ENCODE measurements at regions of chr20 and their contacts with region 1.

Region 1: DNA sequence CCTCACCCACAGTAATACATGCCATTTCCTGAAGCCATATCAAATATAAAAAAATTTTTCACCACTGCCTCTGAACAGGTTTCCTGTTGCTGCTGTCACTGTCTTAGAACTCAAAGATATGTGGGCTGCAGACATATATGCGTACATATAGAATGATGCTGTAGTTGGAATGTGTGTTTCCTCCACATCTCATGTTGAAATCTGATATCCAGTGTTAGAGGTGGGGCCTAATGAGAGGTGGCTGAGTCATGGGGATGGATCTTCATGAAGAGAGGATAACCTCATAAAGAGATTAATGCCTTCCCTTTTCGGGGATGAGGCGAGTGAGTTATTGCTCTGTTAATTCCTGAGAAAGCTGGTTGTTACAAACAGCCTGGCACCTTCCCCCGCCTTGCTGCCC is 7.7 kb upstream of the SCP2D1 start:
- DNase-seq: no peak
- H3K4me3 ChIP-seq: no peak overlapping the region
- H3K4me1 ChIP-seq: no peaks in the 10 kb centered on the region
- H3K27me3 ChIP-seq: 0 out of 2 replicates have a peak, but pooled peaks cover 2% of the 10 kb centered on the region

Region 2: GRCh38 chr20:18904624-18905023 is 98.7 kb after region 1 on chr20:
- in situ Hi-C with region 1: loop called (anchors 25 kb)
- DNase-seq: no peak
- H3K4me3 ChIP-seq: no peak overlapping the region
- H3K4me1 ChIP-seq: no peaks in the 10 kb centered on the region
- H3K27me3 ChIP-seq: no peaks in the 10 kb centered on the region

Region 3: GRCh38 chr20:19090332-19090731 is 284.5 kb after region 1 on chr20:
- in situ Hi-C with region 1: no loop called
- DNase-seq: no peak
- H3K4me3 ChIP-seq: no peak overlapping the region
- H3K4me1 ChIP-seq: no peaks in the 10 kb centered on the region
- H3K27me3 ChIP-seq: no peaks in the 10 kb centered on the region

Region 4: DNA sequence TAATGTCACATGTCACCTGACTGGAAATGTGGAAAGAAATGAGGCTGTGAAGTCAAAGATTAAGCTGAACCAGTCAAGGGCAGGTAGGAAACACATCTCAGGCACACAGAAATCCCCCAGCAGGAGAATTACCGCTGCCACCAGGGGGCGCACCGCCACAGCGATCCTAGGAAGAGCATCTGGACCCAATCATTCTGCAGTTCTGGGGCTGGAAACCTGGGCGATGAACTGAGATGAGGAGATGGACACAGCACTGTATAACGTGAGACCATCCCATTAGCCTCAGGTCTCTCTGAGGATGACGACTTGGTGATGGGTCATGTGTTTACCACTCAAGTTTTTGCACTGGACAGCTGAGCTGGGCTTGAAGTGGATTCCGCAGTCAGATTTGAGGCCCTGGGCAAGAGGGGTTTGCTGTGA is 400.1 kb after region 1 on chr20:
- in situ Hi-C with region 1: loop called (anchors 25 kb)
- DNase-seq: peak; percentile 20 to 81
- H3K4me3 ChIP-seq: no peak overlapping the region
- H3K4me1 ChIP-seq: no peaks in the 10 kb centered on the region
- H3K27me3 ChIP-seq: peaks cover 2% of the 10 kb centered on the region; the same call in 1 of the 2 replicates